ENCODE measurements at regions of chr10 and their contacts with region 1.

Region 1: GRCh38 chr10:70272925-70273316 is 10.9 kb downstream of the NPFFR1 start:
- DNase-seq: peak; percentile 74
- ATAC-seq: peak; percentile 85
- H3K4me3 ChIP-seq: no peak overlapping the region
- H3K27ac ChIP-seq: peak overlapping the region; percentile 40
- H3K4me1 ChIP-seq: peaks cover 31% of the 10 kb centered on the region
- H3K27me3 ChIP-seq: no peaks in the 10 kb centered on the region
- CTCF ChIP-seq: peak; percentile 35 to 75 (median 51); a peak in 5 of 6 replicates
- EP300 ChIP-seq: peak; percentile 40 to 42; a peak in 2 of 4 replicates
- POLR2A ChIP-seq: no peak
- RAD21 ChIP-seq: peak; percentile 45

Region 2: GRCh38 chr10:70227548-70228320 is 45.2 kb before region 1 on chr10:
- CTCF ChIA-PET with region 1: interaction called, 133 read pairs
- POLR2A ChIA-PET with region 1: interaction called, 5 read pairs
- RAD21 ChIA-PET with region 1: interaction called, 65 read pairs
- SMC1A ChIA-PET with region 1: interaction called, 22 read pairs
- in situ Hi-C with region 1: no loop called
- intact Hi-C with region 1: loop called (anchors 5 kb)
- DNase-seq: no peak
- ATAC-seq: peak; percentile 35
- H3K4me3 ChIP-seq: no peak overlapping the region
- H3K27ac ChIP-seq: no peak overlapping the region
- H3K4me1 ChIP-seq: peaks cover 10% of the 10 kb centered on the region
- H3K27me3 ChIP-seq: no peaks in the 10 kb centered on the region
- CTCF ChIP-seq: no peak
- EP300 ChIP-seq: no peak
- POLR2A ChIP-seq: no peak
- RAD21 ChIP-seq: no peak

Region 3: DNA sequence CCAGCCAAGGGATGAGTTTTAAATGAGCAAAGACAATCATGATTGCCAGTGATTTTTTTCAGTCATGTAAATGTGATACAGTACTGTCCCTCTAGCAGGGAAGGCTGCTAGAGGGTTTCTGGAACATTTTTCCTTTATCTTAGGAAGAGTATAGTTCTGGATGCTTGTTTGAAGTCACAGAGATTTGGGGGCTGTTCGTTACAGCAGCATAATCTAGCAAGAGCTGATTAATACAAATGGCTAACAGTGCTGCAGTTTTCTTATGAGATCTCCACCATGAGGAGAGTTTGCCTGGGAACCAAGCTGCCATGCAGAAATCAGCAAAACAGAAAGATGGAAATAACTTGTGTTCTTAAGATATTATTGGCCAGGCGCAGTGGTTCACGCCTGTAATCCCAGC is 31.8 kb before region 1 on chr10:
- CTCF ChIA-PET with region 1: no interaction called
- POLR2A ChIA-PET with region 1: no interaction called
- RAD21 ChIA-PET with region 1: no interaction called
- SMC1A ChIA-PET with region 1: no interaction called
- in situ Hi-C with region 1: no loop called
- intact Hi-C with region 1: no loop called
- DNase-seq: no peak
- ATAC-seq: no peak
- H3K4me3 ChIP-seq: no peak overlapping the region
- H3K27ac ChIP-seq: no peak overlapping the region
- H3K4me1 ChIP-seq: no peaks in the 10 kb centered on the region
- H3K27me3 ChIP-seq: no peaks in the 10 kb centered on the region; a peak in 2 of 4 replicates
- CTCF ChIP-seq: no peak
- EP300 ChIP-seq: no peak
- POLR2A ChIP-seq: no peak
- RAD21 ChIP-seq: no peak

Region 4: DNA sequence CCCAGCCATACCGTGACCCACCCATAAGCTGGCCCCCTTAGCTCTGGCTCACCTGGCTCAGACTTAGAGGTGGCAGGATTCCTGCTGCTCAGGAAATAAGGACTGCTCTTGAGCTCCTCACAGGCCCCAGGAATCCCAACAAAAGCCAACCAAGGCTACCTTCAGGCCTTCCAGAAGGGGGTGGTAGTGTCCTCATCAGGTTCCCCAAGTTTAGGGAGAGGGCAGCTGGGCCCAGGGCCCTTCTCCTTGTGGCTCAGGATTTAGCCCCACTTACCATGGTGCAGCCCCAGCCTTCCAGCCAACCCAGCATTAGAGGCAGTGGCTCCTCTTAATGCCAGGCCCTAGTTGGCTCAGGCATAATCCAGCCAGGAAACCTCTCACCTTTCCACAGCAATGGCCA is 12.7 kb before region 1 on chr10:
- CTCF ChIA-PET with region 1: interaction called, 19 read pairs
- POLR2A ChIA-PET with region 1: interaction called, 3 read pairs
- RAD21 ChIA-PET with region 1: interaction called, 6 read pairs
- SMC1A ChIA-PET with region 1: interaction called, 4 read pairs
- in situ Hi-C with region 1: no loop called
- intact Hi-C with region 1: no loop called
- DNase-seq: no peak
- ATAC-seq: no peak
- H3K4me3 ChIP-seq: no peak overlapping the region
- H3K27ac ChIP-seq: no peak overlapping the region
- H3K4me1 ChIP-seq: no peaks in the 10 kb centered on the region
- H3K27me3 ChIP-seq: peaks cover 0 to 8% of the 10 kb centered on the region in 2 experiments; a peak in 3 of 4 replicates
- CTCF ChIP-seq: no peak
- EP300 ChIP-seq: no peak
- POLR2A ChIP-seq: no peak
- RAD21 ChIP-seq: no peak

Region 5: DNA sequence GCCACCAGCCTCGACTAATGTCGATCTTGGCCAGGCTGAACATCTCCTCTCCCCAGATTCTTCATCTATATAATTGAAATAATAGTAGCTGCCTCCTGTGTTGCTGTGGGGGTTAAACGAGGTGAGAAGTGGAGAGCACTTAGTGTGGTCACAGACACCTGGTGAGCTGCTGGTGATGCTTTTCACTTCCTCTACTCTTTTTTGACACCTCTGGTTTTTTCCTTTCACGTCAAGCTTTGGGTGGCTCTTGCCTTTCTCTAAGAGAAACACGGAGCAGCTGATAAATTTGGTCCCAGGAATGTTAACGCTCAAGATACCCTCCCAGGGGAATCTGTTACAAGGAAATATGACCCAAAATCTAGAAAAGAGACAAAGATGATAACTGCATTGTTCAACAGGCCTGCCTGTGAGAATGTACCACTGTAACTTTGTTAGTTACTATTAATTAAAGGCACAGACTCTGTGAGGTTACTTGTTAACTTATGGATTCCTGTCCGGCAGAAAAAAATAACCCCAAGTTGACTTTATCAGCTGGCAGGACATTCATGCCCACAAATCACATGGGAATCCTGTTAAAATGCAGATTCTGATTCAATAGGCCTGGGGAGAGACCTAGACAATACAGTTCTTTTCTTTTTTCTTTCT is 20.4 kb after region 1 on chr10:
- CTCF ChIA-PET with region 1: interaction called, 22 read pairs
- POLR2A ChIA-PET with region 1: interaction called, 20 read pairs
- RAD21 ChIA-PET with region 1: interaction called, 32 read pairs
- SMC1A ChIA-PET with region 1: interaction called, 50 read pairs
- in situ Hi-C with region 1: no loop called
- intact Hi-C with region 1: no loop called
- DNase-seq: peak; percentile 71
- ATAC-seq: peak; percentile 96
- H3K4me3 ChIP-seq: no peak overlapping the region
- H3K27ac ChIP-seq: peak overlapping the region; percentile 41
- H3K4me1 ChIP-seq: peaks cover 16% of the 10 kb centered on the region
- H3K27me3 ChIP-seq: no peaks in the 10 kb centered on the region
- CTCF ChIP-seq: no peak
- EP300 ChIP-seq: peak; percentile 77 to 84; a peak in 3 of 4 replicates
- POLR2A ChIP-seq: no peak
- RAD21 ChIP-seq: no peak

Region 6: DNA sequence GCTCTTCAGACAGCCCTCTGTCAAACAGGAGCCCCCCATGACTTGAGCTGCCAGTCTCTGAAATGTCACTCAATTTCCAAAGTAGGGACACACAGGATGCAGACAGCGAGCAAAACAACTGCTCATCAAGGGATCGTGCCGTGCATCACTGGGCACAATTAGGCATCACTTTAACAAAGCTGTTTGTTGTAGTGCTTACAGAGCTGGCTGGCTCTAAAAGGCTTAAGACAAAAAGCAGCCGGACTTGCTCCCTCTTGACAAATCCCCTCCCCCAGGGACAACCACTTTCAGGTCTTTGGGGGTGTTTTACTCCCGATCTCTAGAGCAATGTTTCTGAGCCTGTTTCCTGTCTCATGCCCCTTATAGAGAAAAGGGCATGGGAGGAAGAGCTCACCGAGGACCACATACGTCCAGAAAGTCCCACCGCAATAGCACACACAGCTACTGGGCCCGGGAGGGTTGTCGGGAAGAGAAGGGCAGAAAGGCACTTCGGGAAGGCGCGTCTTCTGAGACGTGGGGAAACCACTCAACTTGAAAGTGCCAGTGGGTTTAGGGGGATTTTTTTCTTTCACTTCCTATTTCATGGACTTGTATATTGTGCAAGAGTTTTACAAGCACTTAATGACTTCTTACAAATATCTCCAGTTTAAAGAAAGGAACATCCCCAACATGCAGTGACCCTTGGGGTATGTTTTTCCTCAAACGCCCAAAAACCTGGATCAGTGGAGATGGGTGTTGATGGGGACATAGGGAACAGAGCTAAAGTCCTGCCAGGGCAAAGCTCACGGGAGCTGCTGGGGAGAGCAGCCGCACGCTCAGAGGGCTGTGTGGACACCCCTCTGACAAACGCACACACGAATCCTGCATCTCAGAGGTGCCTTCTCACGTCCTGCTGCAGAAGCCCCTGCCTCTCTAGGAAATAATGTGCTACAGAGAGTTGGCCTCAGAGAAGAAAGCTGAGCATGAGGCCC is 82.4 kb after region 1 on chr10:
- CTCF ChIA-PET with region 1: interaction called, 756 read pairs
- POLR2A ChIA-PET with region 1: interaction called, 8 read pairs
- RAD21 ChIA-PET with region 1: interaction called, 180 read pairs
- SMC1A ChIA-PET with region 1: interaction called, 274 read pairs
- in situ Hi-C with region 1: loop called (anchors 5 kb)
- intact Hi-C with region 1: loop called (anchors 2 kb)
- DNase-seq: peak; percentile 94
- ATAC-seq: peak; percentile 79
- H3K4me3 ChIP-seq: peak overlapping the region; percentile 36
- H3K27ac ChIP-seq: peak overlapping the region; percentile 88
- H3K4me1 ChIP-seq: peaks cover 51% of the 10 kb centered on the region
- H3K27me3 ChIP-seq: no peaks in the 10 kb centered on the region
- CTCF ChIP-seq: no peak
- EP300 ChIP-seq: peak; percentile 52 to 98
- POLR2A ChIP-seq: peak; percentile 46
- RAD21 ChIP-seq: no peak

Region 7: GRCh38 chr10:70461215-70461986 is 188.5 kb after region 1 on chr10:
- CTCF ChIA-PET with region 1: no interaction called
- POLR2A ChIA-PET with region 1: no interaction called
- RAD21 ChIA-PET with region 1: no interaction called
- SMC1A ChIA-PET with region 1: no interaction called
- in situ Hi-C with region 1: no loop called
- intact Hi-C with region 1: no loop called
- DNase-seq: no peak
- ATAC-seq: peak; percentile 88
- H3K4me3 ChIP-seq: no peak overlapping the region
- H3K27ac ChIP-seq: no peak overlapping the region
- H3K4me1 ChIP-seq: no peaks in the 10 kb centered on the region
- H3K27me3 ChIP-seq: peaks cover 3 to 5% of the 10 kb centered on the region in 2 experiments; a peak in 3 of 4 replicates
- CTCF ChIP-seq: peak; percentile 88 to 95 (median 90)
- EP300 ChIP-seq: no peak
- POLR2A ChIP-seq: no peak
- RAD21 ChIP-seq: peak; percentile 98

Measured in GM12878 (cell line).